ENCODE measurements at regions of chr12 and their contacts with region 1.

Region 1: GRCh38 chr12:52980693-52981423 is 25.4 kb upstream of the EIF4B start:
- DNase-seq: peak; percentile 92
- H3K4me3 Mint-ChIP-seq: no peak overlapping the region
- H3K27ac Mint-ChIP-seq: no peak overlapping the region
- H3K4me1 Mint-ChIP-seq: no peaks in the 10 kb centered on the region
- H3K27me3 Mint-ChIP-seq: peaks cover 11% of the 10 kb centered on the region

Region 2: GRCh38 chr12:52372216-52373154 is 608.4 kb before region 1 on chr12:
- CTCF ChIA-PET with region 1: interaction called, 7 read pairs
- intact Hi-C with region 1: loop called (anchors 10 kb)
- DNase-seq: peak; percentile 77
- H3K4me3 Mint-ChIP-seq: no peak overlapping the region
- H3K27ac Mint-ChIP-seq: no peak overlapping the region
- H3K4me1 Mint-ChIP-seq: no peaks in the 10 kb centered on the region
- H3K27me3 Mint-ChIP-seq: no peaks in the 10 kb centered on the region

Region 3: DNA sequence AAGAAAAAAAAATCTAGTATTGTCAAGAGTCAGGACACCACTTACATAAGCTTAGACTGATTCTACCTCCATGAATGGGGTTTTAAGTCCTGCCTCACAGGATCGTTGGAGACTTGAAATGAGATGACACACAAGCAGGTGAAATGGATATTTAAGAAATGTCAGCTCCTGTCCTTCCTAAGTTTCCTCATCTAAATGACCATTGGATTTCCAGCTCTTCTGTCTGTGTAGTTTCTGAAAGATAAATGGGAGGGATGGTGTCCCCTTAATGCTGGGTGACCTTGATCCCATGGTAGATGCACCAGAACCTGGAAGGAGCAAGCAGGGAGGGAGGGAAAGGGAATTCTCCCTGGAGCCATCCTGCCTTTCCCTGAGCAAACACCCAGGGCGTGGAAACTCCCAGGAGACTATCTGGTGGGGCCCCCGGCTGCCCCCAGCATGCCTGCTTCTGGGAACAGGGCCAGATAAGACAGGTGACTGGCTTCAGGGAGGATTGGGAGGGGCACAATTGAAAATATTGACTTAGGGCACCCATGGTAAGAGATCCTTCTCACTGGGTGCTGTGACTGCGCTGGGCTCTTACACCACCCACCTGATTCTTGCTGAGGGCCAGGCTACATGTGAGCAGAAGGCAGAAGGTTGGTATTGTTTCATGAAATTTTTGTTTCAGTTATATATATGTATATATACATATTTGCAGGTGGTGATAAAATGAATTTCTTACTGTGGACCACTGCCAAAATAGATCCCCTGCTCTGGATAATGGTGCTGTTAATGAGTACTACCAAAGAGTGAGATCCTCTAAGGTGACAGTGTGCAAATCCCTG is 85.6 kb before region 1 on chr12:
- CTCF ChIA-PET with region 1: interaction called, 39 read pairs
- intact Hi-C with region 1: no loop called
- DNase-seq: no peak
- H3K4me3 Mint-ChIP-seq: no peak overlapping the region
- H3K27ac Mint-ChIP-seq: no peak overlapping the region
- H3K4me1 Mint-ChIP-seq: no peaks in the 10 kb centered on the region
- H3K27me3 Mint-ChIP-seq: no peaks in the 10 kb centered on the region

Region 4: DNA sequence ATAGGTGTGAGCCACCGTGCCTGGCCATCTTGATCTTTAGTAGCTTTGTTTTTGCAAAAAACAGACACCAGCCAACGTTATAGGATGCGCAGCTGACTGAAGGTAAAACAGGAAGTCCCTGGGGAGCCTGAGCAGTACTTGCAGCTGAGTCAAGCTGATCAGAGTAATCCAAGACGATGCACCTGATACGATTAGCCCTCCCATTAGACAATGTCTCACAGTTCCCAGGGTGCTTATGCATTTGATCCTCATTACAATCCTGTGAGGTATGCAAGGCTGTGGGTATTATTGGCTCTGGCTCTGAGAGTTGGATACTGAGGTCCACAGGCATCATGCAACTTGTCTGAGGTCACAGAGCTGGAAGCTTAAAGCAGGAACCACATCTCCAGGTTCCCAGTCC is 23.9 kb before region 1 on chr12:
- CTCF ChIA-PET with region 1: interaction called, 16 read pairs
- intact Hi-C with region 1: no loop called
- DNase-seq: peak; percentile 27
- H3K4me3 Mint-ChIP-seq: no peak overlapping the region
- H3K27ac Mint-ChIP-seq: no peak overlapping the region
- H3K4me1 Mint-ChIP-seq: peaks cover 5% of the 10 kb centered on the region
- H3K27me3 Mint-ChIP-seq: no peaks in the 10 kb centered on the region

Region 5: GRCh38 chr12:52992699-52993557 is 12.1 kb after region 1 on chr12:
- CTCF ChIA-PET with region 1: interaction called, 16 read pairs
- intact Hi-C with region 1: no loop called
- DNase-seq: no peak
- H3K4me3 Mint-ChIP-seq: no peak overlapping the region
- H3K27ac Mint-ChIP-seq: no peak overlapping the region
- H3K4me1 Mint-ChIP-seq: no peaks in the 10 kb centered on the region
- H3K27me3 Mint-ChIP-seq: no peaks in the 10 kb centered on the region